Sigmoid colon (tissue), 7 donors: ENCODE measurements at regions of chr22 and their contacts with region 1.

Region 1: DNA sequence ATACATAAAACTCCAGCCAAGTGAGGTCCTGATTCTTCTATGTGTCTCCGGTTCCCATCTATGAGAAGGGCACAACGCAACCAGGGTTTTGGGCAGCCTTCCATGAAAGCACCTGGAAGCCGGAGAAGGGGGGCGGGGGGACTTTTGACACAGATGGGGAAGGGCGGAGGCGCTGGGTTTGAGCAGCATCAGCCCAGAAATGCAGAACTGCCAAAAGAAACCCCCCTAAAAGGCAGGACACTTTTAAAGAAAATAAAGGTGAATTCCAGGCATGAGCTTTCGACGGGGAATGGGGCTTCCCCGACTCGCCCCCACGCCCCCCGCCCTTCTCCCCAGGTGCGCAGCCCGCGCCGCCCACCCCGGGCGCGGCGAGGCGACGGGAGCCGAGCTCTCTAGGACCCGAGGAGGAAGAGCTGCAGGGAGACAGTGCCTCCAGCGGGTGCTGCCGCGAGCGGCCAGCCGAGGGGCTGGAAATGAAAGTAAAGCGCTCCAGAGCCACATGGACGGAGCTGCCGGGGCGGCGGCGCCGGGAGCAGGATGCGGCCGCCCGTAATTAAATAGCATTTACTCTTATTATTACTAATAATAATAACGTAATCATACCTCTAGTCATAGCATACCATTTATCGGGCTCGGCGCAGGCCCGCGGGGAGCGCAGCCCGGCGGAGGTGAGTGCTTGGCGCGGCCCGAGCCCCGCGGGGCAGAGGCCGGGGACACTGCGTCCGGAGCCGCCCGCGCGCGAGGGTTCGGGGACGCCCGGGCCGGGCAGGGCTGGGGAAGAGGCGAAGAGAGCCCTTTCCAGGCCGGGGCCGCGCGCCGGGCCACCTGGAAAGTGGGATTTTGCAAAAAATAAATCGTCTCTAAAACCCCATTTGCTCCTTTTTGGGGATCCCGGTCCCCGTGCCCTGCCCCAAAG is at the start of gene ZC3H7B:
- DNase-seq: peak; percentile 92
- H3K4me3 ChIP-seq: peak within 1 kb of the TSS; percentile 78 to 99 (median 95)
- H3K27ac ChIP-seq: peak within 1 kb of the TSS; percentile 81 to 92 (median 88)
- H3K4me1 ChIP-seq: peaks cover 0 to 30% (median 28%) of the 10 kb centered on the region in 4 donors
- H3K27me3 ChIP-seq: no peaks in the 10 kb centered on the region
- CTCF ChIP-seq: peak in 3 of 4 experiments; percentile 31 to 65 (median 39)
- EP300 ChIP-seq: no peak
- POLR2A ChIP-seq: peak; percentile 38 to 52
- total RNA-seq, gene ZC3H7B: 20.1 to 32.2 (median 25.8) TPM

Region 2: GRCh38 chr22:41367039-41367679 is 65.8 kb after region 1 on chr22:
- intact Hi-C with region 1: loop called (anchors 5 kb)
- DNase-seq: peak; percentile 99
- H3K4me3 ChIP-seq: peak overlapping the region; percentile 41 to 57 (median 56)
- H3K27ac ChIP-seq: peak overlapping the region; percentile 83 to 85 (median 83)
- H3K4me1 ChIP-seq: peaks cover 0 to 51% (median 34%) of the 10 kb centered on the region in 4 donors
- H3K27me3 ChIP-seq: no peaks in the 10 kb centered on the region
- CTCF ChIP-seq: peak in 3 of 4 experiments; percentile 22 to 27 (median 27)
- EP300 ChIP-seq: peak in 2 of 4 donors; percentile 22 to 69
- POLR2A ChIP-seq: peak; percentile 46 to 69

Region 3: DNA sequence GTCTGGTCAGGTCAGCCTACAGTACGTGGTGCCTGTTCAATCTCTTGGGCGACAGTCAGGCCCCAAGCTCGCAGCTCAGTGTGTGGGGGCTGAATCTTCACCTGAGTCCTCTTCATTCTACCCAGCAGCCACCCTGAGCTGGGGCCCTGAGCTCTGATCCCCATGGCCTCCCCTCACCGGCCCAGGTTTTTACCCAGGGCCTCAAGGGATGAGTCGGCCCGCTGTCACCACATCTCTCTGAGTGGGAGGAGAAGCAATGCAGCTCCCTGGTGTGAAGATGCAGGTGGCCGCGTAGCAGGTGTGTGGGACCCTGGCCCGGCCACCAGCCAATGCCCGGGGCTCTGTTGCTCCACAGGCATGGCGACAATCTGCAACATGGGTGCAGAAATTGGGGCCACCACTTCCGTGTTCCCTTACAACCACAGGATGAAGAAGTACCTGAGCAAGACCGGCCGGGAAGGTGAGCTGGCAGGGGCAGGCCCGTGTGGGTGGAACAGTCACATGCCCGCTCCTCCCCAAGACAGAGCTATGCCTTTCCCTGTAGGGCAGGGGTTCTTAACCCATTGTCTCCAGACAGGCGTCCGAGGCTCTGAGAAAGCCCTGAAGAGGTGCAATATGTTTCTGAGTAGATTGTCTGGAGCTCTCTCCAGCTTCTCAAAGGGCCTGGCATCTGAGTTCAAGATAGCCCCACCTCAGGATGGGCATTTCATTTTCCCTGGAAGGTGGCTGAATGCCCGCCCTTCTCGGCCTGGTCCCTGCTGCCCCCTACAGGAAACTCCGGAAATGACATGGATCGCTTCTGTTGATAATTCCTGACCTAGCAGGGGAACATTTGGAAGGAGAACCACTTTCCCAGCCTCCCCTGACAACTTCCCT is 216.0 kb after region 1 on chr22:
- intact Hi-C with region 1: loop called (anchors 5 kb)
- DNase-seq: peak; percentile 89
- H3K4me3 ChIP-seq: no peak overlapping the region
- H3K27ac ChIP-seq: peak overlapping the region; percentile 55 to 75 (median 62)
- H3K4me1 ChIP-seq: peaks cover 0 to 24% (median 19%) of the 10 kb centered on the region in 4 donors
- H3K27me3 ChIP-seq: no peaks in the 10 kb centered on the region
- CTCF ChIP-seq: peak; percentile 86 to 92 (median 90)
- EP300 ChIP-seq: no peak
- POLR2A ChIP-seq: no peak

Region 4: GRCh38 chr22:41621099-41621910 is 319.9 kb after region 1 on chr22 and contains the start of gene XRCC6:
- intact Hi-C with region 1: loop called (anchors 5 kb)
- DNase-seq: peak; percentile 100
- H3K4me3 ChIP-seq: peak within 1 kb of the TSS; percentile 74 to 95 (median 86)
- H3K27ac ChIP-seq: peak within 1 kb of the TSS; percentile 95 to 99 (median 98)
- H3K4me1 ChIP-seq: peaks cover 0 to 37% (median 31%) of the 10 kb centered on the region in 4 donors
- H3K27me3 ChIP-seq: no peaks in the 10 kb centered on the region
- CTCF ChIP-seq: no peak
- EP300 ChIP-seq: peak in 2 of 4 donors; percentile 59 to 84
- POLR2A ChIP-seq: peak; percentile 89 to 96
- total RNA-seq, gene XRCC6: 143 to 220 (median 202) TPM